ENCODE measurements at regions of chr12 and their contacts with region 1.

Region 1: GRCh38 chr12:118372541-118373495 is at the start of gene TAOK3:
- DNase-seq: peak; percentile 97 to 99 (median 98)
- H3K4me3 ChIP-seq: peak within 1 kb of the TSS; percentile 96
- H3K27ac ChIP-seq: peak within 1 kb of the TSS in 1 of 2 donors; percentile 68
- H3K4me1 ChIP-seq: peaks cover 6% of the 10 kb centered on the region
- H3K27me3 ChIP-seq: no peaks in the 10 kb centered on the region
- CTCF ChIP-seq: no peak
- EP300 ChIP-seq: no peak
- POLR2A ChIP-seq: peak; percentile 60
- total RNA-seq, gene TAOK3: 12.6 to 26.6 (median 23.0) TPM

Region 2: DNA sequence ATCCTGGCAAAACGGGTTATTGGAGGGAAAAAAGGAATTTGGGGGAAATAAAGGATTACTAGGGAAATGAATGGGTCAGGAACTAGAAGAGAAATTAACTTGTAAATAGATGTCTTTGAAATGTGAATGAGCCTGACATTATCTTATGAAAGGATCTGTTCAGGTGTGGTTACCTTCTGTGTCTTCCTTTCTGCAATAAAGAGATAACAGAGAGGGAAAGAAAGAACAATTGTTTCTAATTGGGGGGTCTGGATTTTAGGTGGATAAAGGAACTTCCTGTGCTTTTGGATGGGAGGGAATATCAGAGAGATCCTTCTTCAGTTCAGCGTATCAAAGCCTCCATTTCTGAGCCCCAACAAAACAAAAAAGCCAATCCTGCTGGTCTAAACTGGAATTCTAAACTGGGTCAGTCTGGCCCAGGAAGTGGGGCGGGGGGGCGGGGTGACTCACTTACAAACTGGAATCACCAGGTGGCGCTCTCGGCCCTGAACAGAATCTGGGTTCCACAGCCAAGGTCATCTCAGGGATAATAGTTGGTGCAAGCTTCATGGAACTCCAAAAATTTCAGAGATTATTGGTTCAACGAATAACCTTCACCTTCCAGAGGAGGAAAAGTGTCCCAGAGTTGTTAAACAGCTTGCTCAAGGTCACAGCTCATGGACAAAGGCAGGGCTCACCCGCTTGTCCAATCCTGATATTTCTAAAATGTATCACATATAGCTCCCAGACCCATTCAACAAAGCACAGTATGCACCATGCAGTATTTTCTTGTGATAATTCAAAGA is 252.0 kb before region 1 on chr12:
- intact Hi-C with region 1: loop called in 2 of 4 experiments (anchors 5 kb)
- DNase-seq: peak; percentile 83 to 91 (median 85)
- H3K4me3 ChIP-seq: no peak overlapping the region
- H3K27ac ChIP-seq: peak overlapping the region; percentile 47 to 82
- H3K4me1 ChIP-seq: no peaks in the 10 kb centered on the region
- H3K27me3 ChIP-seq: no peaks in the 10 kb centered on the region
- CTCF ChIP-seq: peak in 2 of 3 donors; percentile 44 to 65
- EP300 ChIP-seq: no peak
- POLR2A ChIP-seq: no peak

Region 3: GRCh38 chr12:118183705-118184104 is 189.1 kb before region 1 on chr12:
- intact Hi-C with region 1: loop called (anchors 5 kb)
- DNase-seq: no peak
- H3K4me3 ChIP-seq: no peak overlapping the region
- H3K27ac ChIP-seq: no peak overlapping the region
- H3K4me1 ChIP-seq: peaks cover 6% of the 10 kb centered on the region
- H3K27me3 ChIP-seq: no peaks in the 10 kb centered on the region
- CTCF ChIP-seq: no peak
- EP300 ChIP-seq: no peak
- POLR2A ChIP-seq: no peak

Region 4: GRCh38 chr12:118189741-118190191 is 183.1 kb before region 1 on chr12:
- intact Hi-C with region 1: loop called (anchors 5 kb)
- DNase-seq: peak; percentile 23 to 54 (median 38)
- H3K4me3 ChIP-seq: peak overlapping the region; percentile 38
- H3K27ac ChIP-seq: peak overlapping the region; percentile 49 to 74
- H3K4me1 ChIP-seq: peaks cover 5% of the 10 kb centered on the region
- H3K27me3 ChIP-seq: no peaks in the 10 kb centered on the region
- CTCF ChIP-seq: no peak
- EP300 ChIP-seq: no peak
- POLR2A ChIP-seq: no peak

Region 5: GRCh38 chr12:118271790-118272417 is 100.9 kb before region 1 on chr12:
- intact Hi-C with region 1: no loop called
- DNase-seq: no peak
- H3K4me3 ChIP-seq: no peak overlapping the region
- H3K27ac ChIP-seq: no peak overlapping the region
- H3K4me1 ChIP-seq: no peaks in the 10 kb centered on the region
- H3K27me3 ChIP-seq: no peaks in the 10 kb centered on the region
- CTCF ChIP-seq: no peak
- EP300 ChIP-seq: no peak
- POLR2A ChIP-seq: no peak

Region 6: GRCh38 chr12:118498181-118498580 is 125.4 kb after region 1 on chr12:
- intact Hi-C with region 1: no loop called
- DNase-seq: no peak
- H3K4me3 ChIP-seq: no peak overlapping the region
- H3K27ac ChIP-seq: no peak overlapping the region
- H3K4me1 ChIP-seq: no peaks in the 10 kb centered on the region
- H3K27me3 ChIP-seq: no peaks in the 10 kb centered on the region
- CTCF ChIP-seq: no peak
- EP300 ChIP-seq: no peak
- POLR2A ChIP-seq: no peak

Region 7: DNA sequence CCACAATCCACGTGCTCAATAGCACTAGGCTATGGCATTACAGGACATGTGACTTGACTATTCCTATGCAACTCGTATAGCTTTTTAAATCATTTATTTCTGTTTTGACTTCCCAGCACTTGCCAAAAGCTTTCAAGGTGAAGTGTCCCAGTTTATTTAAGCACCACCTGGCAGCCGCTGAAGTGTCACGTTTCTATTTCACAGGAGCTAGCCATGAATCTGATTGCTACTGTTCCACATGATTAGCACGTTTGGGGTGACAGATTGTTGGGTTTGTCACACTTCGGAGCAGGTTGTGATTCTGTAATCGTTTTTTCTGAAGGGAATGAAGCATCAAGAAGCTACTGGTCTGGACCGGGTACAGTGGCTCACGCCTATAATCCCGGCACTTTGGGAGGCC is 1576.3 kb after region 1 on chr12:
- intact Hi-C with region 1: no loop called
- DNase-seq: no peak
- H3K4me3 ChIP-seq: no peak overlapping the region
- H3K27ac ChIP-seq: no peak overlapping the region
- H3K4me1 ChIP-seq: no peaks in the 10 kb centered on the region
- H3K27me3 ChIP-seq: no peaks in the 10 kb centered on the region
- CTCF ChIP-seq: no peak
- EP300 ChIP-seq: no peak
- POLR2A ChIP-seq: no peak

Measured in ovary (tissue), 10 donors.